Caco-2 (cell line): ENCODE measurements at regions of chr17 and their contacts with region 1.

Region 1: GRCh38 chr17:44170499-44171201 is at the start of gene ASB16:
- DNase-seq: no peak
- H3K4me3 ChIP-seq: no peak within 1 kb of the TSS
- H3K4me3 Mint-ChIP-seq: no peak within 1 kb of the TSS
- H3K27ac Mint-ChIP-seq: no peak within 1 kb of the TSS
- H3K4me1 ChIP-seq: peaks cover 18% of the 10 kb centered on the region
- H3K4me1 Mint-ChIP-seq: peaks cover 12% of the 10 kb centered on the region
- H3K27me3 ChIP-seq: no peaks in the 10 kb centered on the region
- H3K27me3 Mint-ChIP-seq: no peaks in the 10 kb centered on the region
- CTCF ChIP-seq: peak in 1 of 2 experiments; percentile 23
- total RNA-seq, gene ASB16: 0.26 TPM in 1 of 2 replicates, not detected in the other

Region 2: DNA sequence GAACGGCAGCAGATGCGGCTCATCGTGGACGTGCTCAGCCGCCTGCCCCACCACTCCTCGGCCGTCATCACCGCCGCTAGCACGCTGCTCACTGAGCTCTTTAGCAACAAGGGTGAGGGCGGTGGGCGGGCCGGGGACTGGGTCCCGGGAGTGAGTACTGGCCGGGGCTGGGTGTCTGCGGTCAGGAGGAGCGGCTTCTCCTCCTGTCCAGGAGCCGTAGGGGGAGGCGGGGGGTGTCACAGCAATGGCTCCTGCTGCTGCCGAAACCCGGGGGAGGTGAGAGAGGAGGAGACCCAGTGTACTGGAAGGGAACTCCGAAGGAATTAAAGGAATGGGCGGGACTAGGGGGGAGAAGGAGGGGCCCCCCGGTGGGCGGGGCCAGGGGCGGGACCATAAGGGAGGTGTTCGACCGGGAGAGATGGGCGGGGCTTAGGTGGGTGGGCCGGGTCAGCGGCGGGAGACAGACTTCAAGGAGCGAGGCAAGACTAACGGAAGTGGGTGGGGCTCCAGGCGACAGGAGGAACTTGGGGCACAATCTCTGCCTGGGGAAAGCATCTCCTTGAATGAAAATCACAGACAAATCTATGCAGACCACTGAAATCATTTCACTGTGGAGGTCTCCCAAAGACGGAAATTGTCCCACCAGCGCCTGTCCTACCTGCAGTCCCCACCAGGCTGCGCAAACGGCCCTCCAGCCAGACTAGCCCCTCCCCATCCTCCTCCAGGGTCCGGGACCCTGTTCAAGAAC is 163.9 kb before region 1 on chr17:
- CTCF ChIA-PET with region 1: interaction called, 13 read pairs
- POLR2A ChIA-PET with region 1: no interaction called
- intact Hi-C with region 1: no loop called
- DNase-seq: peak; percentile 95 to 99
- H3K4me3 ChIP-seq: peak overlapping the region; percentile 50
- H3K4me3 Mint-ChIP-seq: peak overlapping the region; percentile 69
- H3K27ac Mint-ChIP-seq: peak overlapping the region; percentile 5
- H3K4me1 ChIP-seq: peaks cover 18% of the 10 kb centered on the region
- H3K4me1 Mint-ChIP-seq: no peaks in the 10 kb centered on the region
- H3K27me3 ChIP-seq: peaks cover 3% of the 10 kb centered on the region
- H3K27me3 Mint-ChIP-seq: peaks cover 4% of the 10 kb centered on the region
- CTCF ChIP-seq: peak; percentile 33 to 53

Region 3: GRCh38 chr17:44095642-44096496 is 74.8 kb before region 1 on chr17:
- CTCF ChIA-PET with region 1: interaction called, 4 read pairs
- POLR2A ChIA-PET with region 1: no interaction called
- intact Hi-C with region 1: loop called (anchors 1 kb)
- DNase-seq: peak; percentile 67 to 74
- H3K4me3 ChIP-seq: no peak overlapping the region
- H3K4me3 Mint-ChIP-seq: peak overlapping the region; percentile 7
- H3K27ac Mint-ChIP-seq: peak overlapping the region; percentile 69
- H3K4me1 ChIP-seq: peaks cover 9% of the 10 kb centered on the region; the same call in 1 of the 2 replicates
- H3K4me1 Mint-ChIP-seq: peaks cover 8% of the 10 kb centered on the region
- H3K27me3 ChIP-seq: no peaks in the 10 kb centered on the region
- H3K27me3 Mint-ChIP-seq: no peaks in the 10 kb centered on the region
- CTCF ChIP-seq: peak in 1 of 2 experiments; percentile 14

Region 4: DNA sequence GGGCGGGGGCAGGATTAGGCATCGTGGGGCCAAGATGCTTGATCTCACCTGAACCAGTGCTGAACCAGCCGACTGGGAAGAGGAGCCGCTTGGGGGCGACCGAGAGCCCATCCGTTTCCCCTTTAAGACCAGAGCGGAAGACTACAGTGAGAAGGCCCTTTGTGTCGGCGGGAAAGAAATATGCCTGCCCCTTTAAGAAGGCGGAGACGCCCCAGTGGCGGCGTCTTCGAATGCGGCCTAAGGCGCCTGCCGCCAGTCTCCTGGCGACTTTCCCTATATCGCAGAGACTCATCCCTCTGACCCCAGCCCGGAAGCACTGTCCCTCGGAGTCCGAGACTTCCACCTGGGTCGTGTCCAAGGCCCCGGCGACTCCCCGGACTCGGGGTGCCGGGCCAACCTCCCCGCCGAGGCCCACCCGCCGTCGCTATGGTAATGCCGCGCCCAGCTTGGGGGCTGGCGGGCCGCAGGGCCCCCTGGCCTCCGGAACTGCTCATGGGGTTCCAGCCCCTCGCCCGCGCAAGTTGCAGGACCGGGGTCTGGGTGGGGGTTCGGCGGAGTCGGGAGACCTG is 28.8 kb before region 1 on chr17 and contains the start of gene HROB:
- CTCF ChIA-PET with region 1: interaction called, 20 read pairs
- POLR2A ChIA-PET with region 1: no interaction called
- intact Hi-C with region 1: loop called (anchors 1 kb)
- DNase-seq: peak; percentile 98 to 99
- H3K4me3 ChIP-seq: peak within 1 kb of the TSS; percentile 66
- H3K4me3 Mint-ChIP-seq: peak within 1 kb of the TSS; percentile 91
- H3K27ac Mint-ChIP-seq: peak within 1 kb of the TSS; percentile 95
- H3K4me1 ChIP-seq: peaks cover 18% of the 10 kb centered on the region
- H3K4me1 Mint-ChIP-seq: peaks cover 11% of the 10 kb centered on the region
- H3K27me3 ChIP-seq: no peaks in the 10 kb centered on the region
- H3K27me3 Mint-ChIP-seq: no peaks in the 10 kb centered on the region
- CTCF ChIP-seq: peak; percentile 95 to 97
- total RNA-seq, gene HROB: 15.2 and 17.0 TPM in 2 replicates

Region 5: GRCh38 chr17:44389723-44390202 is 219.1 kb after region 1 on chr17:
- CTCF ChIA-PET with region 1: no interaction called
- POLR2A ChIA-PET with region 1: no interaction called
- intact Hi-C with region 1: no loop called
- DNase-seq: peak in 1 of 2 experiments; percentile 23
- H3K4me3 ChIP-seq: no peak overlapping the region
- H3K4me3 Mint-ChIP-seq: no peak overlapping the region
- H3K27ac Mint-ChIP-seq: no peak overlapping the region
- H3K4me1 ChIP-seq: 0 out of 2 replicates have a peak, but pooled peaks cover 4% of the 10 kb centered on the region
- H3K4me1 Mint-ChIP-seq: no peaks in the 10 kb centered on the region
- H3K27me3 ChIP-seq: no peaks in the 10 kb centered on the region
- H3K27me3 Mint-ChIP-seq: no peaks in the 10 kb centered on the region
- CTCF ChIP-seq: no peak